ENCODE measurements at regions of chr15 and their contacts with region 1.

Region 1: DNA sequence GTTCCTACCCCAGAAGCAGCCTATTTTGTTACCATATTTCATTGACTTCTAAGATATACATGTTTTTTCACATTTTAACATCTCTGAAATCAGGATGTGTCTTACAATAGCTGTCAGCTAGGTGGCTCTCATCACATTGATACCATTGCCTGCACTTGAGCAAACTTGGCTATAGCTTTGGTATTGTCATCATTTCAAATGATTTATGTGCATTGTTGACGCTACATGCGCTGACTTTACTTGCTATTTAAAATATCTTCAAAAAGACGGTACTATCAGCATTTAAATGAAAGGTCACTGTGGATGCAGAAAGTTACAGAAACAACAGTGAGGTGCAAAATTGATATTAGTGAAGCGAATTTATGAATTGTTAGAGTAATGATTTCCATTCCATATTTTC is 54.0 kb upstream of the ABHD2 start:
- DNase-seq: peak in 1 of 9 donors; percentile 17
- ATAC-seq: no peak
- H3K4me3 ChIP-seq: no peak overlapping the region
- H3K4me3 Mint-ChIP-seq: no peak overlapping the region
- H3K27ac ChIP-seq: no peak overlapping the region
- H3K27ac Mint-ChIP-seq: peak overlapping the region in 1 of 9 donors; percentile 25
- H3K4me1 ChIP-seq: no peaks in the 10 kb centered on the region
- H3K4me1 Mint-ChIP-seq: peaks cover 0 to 4% (median 0%) of the 10 kb centered on the region in 7 donors
- H3K27me3 ChIP-seq: no peaks in the 10 kb centered on the region
- H3K27me3 Mint-ChIP-seq: peaks cover 0 to 33% (median 8%) of the 10 kb centered on the region in 5 donors

Region 2: GRCh38 chr15:89057504-89058133 is 23.3 kb after region 1 on chr15:
- CTCF ChIA-PET with region 1: interaction called, 12 read pairs
- POLR2A ChIA-PET with region 1: interaction called, 4 read pairs
- intact Hi-C with region 1: loop called in 1 of 2 experiments (anchors 1 kb)
- DNase-seq: peak; percentile 66 to 87 (median 78)
- ATAC-seq: peak; percentile 99
- H3K4me3 ChIP-seq: no peak overlapping the region
- H3K4me3 Mint-ChIP-seq: no peak overlapping the region
- H3K27ac ChIP-seq: no peak overlapping the region
- H3K27ac Mint-ChIP-seq: peak overlapping the region in 3 of 9 donors; percentile 25 to 62 (median 26)
- H3K4me1 ChIP-seq: no peaks in the 10 kb centered on the region
- H3K4me1 Mint-ChIP-seq: peaks cover 0 to 11% (median 5%) of the 10 kb centered on the region in 7 donors
- H3K27me3 ChIP-seq: no peaks in the 10 kb centered on the region
- H3K27me3 Mint-ChIP-seq: peaks cover 0 to 3% (median 0%) of the 10 kb centered on the region in 5 donors

Region 3: GRCh38 chr15:89665449-89666181 is 631.3 kb after region 1 on chr15:
- CTCF ChIA-PET with region 1: no interaction called
- POLR2A ChIA-PET with region 1: no interaction called
- intact Hi-C with region 1: no loop called
- DNase-seq: peak in 1 of 9 donors; percentile 34
- ATAC-seq: peak; percentile 31
- H3K4me3 ChIP-seq: no peak overlapping the region
- H3K4me3 Mint-ChIP-seq: peak overlapping the region in 2 of 10 donors; percentile 19 to 35
- H3K27ac ChIP-seq: no peak overlapping the region
- H3K27ac Mint-ChIP-seq: no peak overlapping the region
- H3K4me1 ChIP-seq: no peaks in the 10 kb centered on the region
- H3K4me1 Mint-ChIP-seq: peaks cover 0 to 5% (median 3%) of the 10 kb centered on the region in 7 donors
- H3K27me3 ChIP-seq: no peaks in the 10 kb centered on the region
- H3K27me3 Mint-ChIP-seq: peaks cover 18 to 40% (median 36%) of the 10 kb centered on the region in 5 donors

Measured in naive thymus-derived CD4-positive, alpha-beta T cell (primary cell).